ENCODE measurements at regions of chr15 and their contacts with region 1.

Region 1: GRCh38 chr15:40893733-40894688 is at the start of gene VPS18:
- DNase-seq: peak; percentile 98 to 100 (median 99)
- ATAC-seq: peak; percentile 98
- H3K4me3 ChIP-seq: peak within 1 kb of the TSS; percentile 82
- H3K27ac ChIP-seq: peak within 1 kb of the TSS; percentile 80
- H3K4me1 ChIP-seq: peaks cover 6% of the 10 kb centered on the region
- H3K27me3 ChIP-seq: no peaks in the 10 kb centered on the region
- total RNA-seq, gene VPS18: 17.6 to 21.0 (median 19.4) TPM

Region 2: GRCh38 chr15:40684381-40684780 is 209.6 kb before region 1 on chr15:
- intact Hi-C with region 1: loop called in 1 of 4 experiments (anchors 5 kb)
- DNase-seq: no peak
- ATAC-seq: no peak
- H3K4me3 ChIP-seq: no peak overlapping the region
- H3K27ac ChIP-seq: no peak overlapping the region
- H3K4me1 ChIP-seq: no peaks in the 10 kb centered on the region
- H3K27me3 ChIP-seq: no peaks in the 10 kb centered on the region

Region 3: GRCh38 chr15:40694688-40695468 is 199.1 kb before region 1 on chr15 and contains the start of gene RAD51:
- intact Hi-C with region 1: loop called in 1 of 4 experiments (anchors 10 kb)
- DNase-seq: peak; percentile 95 to 98 (median 97)
- ATAC-seq: peak; percentile 99
- H3K4me3 ChIP-seq: peak within 1 kb of the TSS; percentile 72
- H3K27ac ChIP-seq: peak within 1 kb of the TSS; percentile 98
- H3K4me1 ChIP-seq: peaks cover 7% of the 10 kb centered on the region
- H3K27me3 ChIP-seq: no peaks in the 10 kb centered on the region
- total RNA-seq, gene RAD51: 0.20 to 1.4 (median 0.81) TPM

Region 4: DNA sequence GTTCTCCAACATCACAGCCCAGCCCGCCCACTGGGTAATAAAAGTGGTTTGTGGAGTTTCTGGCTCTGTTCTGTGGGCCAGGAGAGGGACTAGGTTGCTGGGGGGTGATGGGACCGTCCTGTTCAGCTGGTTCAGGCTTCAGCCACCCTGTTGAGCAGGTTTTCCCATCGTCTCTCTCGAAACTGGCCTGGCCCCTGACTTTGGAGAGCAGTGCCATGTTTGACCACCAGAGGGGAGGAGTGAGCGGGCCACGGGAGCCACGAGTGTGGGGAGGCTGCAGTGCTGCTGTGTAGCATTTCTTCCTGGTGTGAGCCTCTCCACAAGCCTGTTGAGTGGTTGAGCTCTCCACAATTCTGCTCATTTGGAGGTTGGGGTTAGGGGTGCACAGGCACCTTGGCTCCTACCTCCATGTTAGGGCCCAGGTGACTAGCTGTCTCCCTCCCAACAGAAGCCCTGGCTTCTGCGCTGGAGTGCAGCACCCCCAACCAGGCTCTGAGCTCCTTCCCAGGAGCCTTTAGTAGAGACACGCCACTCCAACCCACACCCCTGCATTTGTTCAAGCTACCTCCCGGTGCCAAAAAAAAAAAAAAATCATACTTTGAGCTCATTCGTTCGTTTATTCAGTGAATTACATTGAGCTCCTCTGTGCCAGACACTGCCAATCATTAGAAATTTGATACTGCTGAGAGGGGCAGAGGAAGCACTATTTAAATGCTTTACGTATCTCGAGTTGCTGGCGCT is 36.2 kb before region 1 on chr15:
- intact Hi-C with region 1: loop called in 2 of 4 experiments (anchors 5 kb)
- DNase-seq: peak; percentile 57 to 85 (median 84)
- ATAC-seq: peak; percentile 82 to 86
- H3K4me3 ChIP-seq: no peak overlapping the region
- H3K27ac ChIP-seq: no peak overlapping the region
- H3K4me1 ChIP-seq: no peaks in the 10 kb centered on the region
- H3K27me3 ChIP-seq: no peaks in the 10 kb centered on the region

Region 5: DNA sequence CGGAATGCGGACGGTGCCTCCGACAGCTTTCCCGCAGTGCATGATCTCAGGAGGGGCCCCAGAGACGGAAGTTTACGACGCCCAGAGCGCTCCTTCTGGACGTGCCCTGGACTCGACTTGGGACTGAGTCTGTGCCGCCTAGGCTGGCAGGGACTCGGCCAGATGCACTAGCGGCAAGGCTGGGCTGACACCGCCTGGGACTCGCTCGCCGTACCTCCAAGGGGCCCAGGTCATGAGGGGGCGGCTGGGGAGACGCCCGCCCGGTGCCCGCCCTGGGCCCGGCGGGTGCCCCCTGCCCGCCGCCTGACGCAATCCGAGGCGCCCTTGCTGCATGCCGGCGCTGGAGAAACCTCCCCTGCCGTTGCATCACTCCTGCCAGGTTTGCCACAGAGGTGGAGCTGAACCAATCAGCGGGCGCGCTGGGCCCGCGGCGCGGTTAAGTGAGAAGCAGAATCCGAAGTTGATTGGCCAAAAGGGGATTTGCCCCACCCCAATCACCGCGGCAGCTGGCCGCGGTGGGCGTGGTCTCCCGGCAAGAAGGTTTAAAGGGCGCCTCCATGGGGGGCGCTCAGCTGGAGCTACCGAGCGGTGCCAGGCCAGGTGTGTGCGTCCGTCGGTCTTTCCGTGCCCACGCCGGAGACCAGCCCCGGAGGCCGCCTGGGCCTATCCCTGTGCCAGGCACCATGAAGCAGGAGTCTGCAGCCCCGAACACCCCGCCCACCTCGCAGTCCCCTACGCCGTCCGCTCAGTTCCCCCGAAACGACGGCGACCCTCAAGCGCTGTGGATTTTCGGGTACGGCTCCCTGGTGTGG is 59.1 kb after region 1 on chr15 and contains the start of gene CHAC1:
- intact Hi-C with region 1: no loop called
- DNase-seq: peak; percentile 95 to 98 (median 97)
- ATAC-seq: peak; percentile 95 to 96
- H3K4me3 ChIP-seq: peak within 1 kb of the TSS; percentile 67
- H3K27ac ChIP-seq: peak within 1 kb of the TSS; percentile 36
- H3K4me1 ChIP-seq: peaks cover 2% of the 10 kb centered on the region
- H3K27me3 ChIP-seq: no peaks in the 10 kb centered on the region
- total RNA-seq, gene CHAC1: 1.6 to 2.0 (median 1.7) TPM